CD4-positive, alpha-beta memory T cell (primary cell): ENCODE measurements at regions of chr6 and their contacts with region 1.

Region 1: GRCh38 chr6:29752451-29753308 is 29.4 kb downstream of the HLA-F start:
- DNase-seq: peak; percentile 77 to 84 (median 81)
- H3K4me3 ChIP-seq: peak overlapping the region; percentile 95 to 97
- H3K4me3 Mint-ChIP-seq: peak overlapping the region; percentile 88 to 98 (median 96)
- H3K27ac ChIP-seq: peak overlapping the region; percentile 71
- H3K27ac Mint-ChIP-seq: peak overlapping the region; percentile 77 to 96 (median 95)
- H3K4me1 ChIP-seq: peaks cover 27% of the 10 kb centered on the region
- H3K4me1 Mint-ChIP-seq: peaks cover 30 to 57% (median 39%) of the 10 kb centered on the region in 4 donors
- H3K27me3 ChIP-seq: no peaks in the 10 kb centered on the region
- H3K27me3 Mint-ChIP-seq: peaks cover 0 to 5% of the 10 kb centered on the region in 2 donors

Region 2: GRCh38 chr6:29705389-29706231 is 47.1 kb before region 1 on chr6:
- CTCF ChIA-PET with region 1: interaction called, 100 read pairs
- POLR2A ChIA-PET with region 1: interaction called, 23 read pairs
- intact Hi-C with region 1: loop called (anchors 1 kb)
- DNase-seq: peak in 2 of 5 donors; percentile 48 to 51
- H3K4me3 ChIP-seq: no peak overlapping the region
- H3K4me3 Mint-ChIP-seq: peak overlapping the region in 4 of 8 donors; percentile 33 to 64 (median 44)
- H3K27ac ChIP-seq: no peak overlapping the region
- H3K27ac Mint-ChIP-seq: peak overlapping the region; percentile 63 to 90 (median 83)
- H3K4me1 ChIP-seq: peaks cover 54% of the 10 kb centered on the region
- H3K4me1 Mint-ChIP-seq: peaks cover 38 to 58% (median 51%) of the 10 kb centered on the region in 4 donors
- H3K27me3 ChIP-seq: no peaks in the 10 kb centered on the region
- H3K27me3 Mint-ChIP-seq: peaks cover 6 to 15% of the 10 kb centered on the region in 2 donors

Region 3: DNA sequence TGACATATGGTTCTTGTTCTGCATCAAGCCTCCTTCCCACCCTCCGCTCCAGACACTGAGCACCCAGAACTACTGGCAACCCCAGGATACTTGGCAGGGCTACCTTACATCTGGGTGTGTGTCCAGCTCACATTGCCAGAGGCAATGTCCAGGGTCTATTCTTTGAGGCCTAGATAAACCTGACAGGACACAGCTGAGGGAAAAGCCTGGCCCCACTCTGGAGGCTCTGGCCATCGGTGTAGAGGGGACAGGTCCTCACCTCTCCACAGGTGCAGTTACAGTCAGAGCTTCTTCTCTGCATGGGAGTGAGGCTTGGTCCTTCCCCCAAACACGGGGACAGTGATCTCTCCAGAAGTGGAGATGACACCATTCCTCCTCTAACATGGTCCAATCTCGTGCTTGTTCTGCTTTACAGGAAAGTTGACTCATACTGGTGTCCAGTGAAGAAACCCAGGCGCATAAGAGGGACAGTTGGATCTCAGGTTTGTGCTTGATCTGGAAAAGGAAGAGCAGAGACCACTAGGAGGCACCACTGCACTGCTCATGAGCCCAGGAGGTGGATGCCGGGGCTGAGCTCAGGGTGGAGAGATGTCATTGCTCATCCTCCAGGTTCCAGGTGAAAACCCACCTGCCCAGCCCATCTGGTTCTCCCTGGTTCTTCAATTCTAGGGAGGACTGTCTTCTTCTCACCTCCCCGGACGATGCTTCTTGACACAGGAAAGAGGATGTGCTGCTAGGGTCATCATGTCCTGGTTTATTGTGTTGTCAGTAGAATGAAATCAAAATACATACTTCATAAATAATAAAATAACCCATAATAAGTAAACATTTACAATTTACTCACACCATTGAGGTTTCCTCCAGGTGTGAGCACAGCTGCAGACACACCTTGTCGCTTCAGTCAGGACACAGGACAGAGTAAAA is 14.7 kb before region 1 on chr6:
- CTCF ChIA-PET with region 1: interaction called, 141 read pairs
- POLR2A ChIA-PET with region 1: interaction called, 99 read pairs
- intact Hi-C with region 1: loop called (anchors 1 kb)
- DNase-seq: peak; percentile 68 to 78 (median 72)
- H3K4me3 ChIP-seq: no peak overlapping the region
- H3K4me3 Mint-ChIP-seq: no peak overlapping the region
- H3K27ac ChIP-seq: no peak overlapping the region
- H3K27ac Mint-ChIP-seq: peak overlapping the region in 1 of 7 donors; percentile 2
- H3K4me1 ChIP-seq: peaks cover 3% of the 10 kb centered on the region
- H3K4me1 Mint-ChIP-seq: peaks cover 5 to 18% (median 8%) of the 10 kb centered on the region in 4 donors
- H3K27me3 ChIP-seq: no peaks in the 10 kb centered on the region
- H3K27me3 Mint-ChIP-seq: no peaks in the 10 kb centered on the region

Region 4: DNA sequence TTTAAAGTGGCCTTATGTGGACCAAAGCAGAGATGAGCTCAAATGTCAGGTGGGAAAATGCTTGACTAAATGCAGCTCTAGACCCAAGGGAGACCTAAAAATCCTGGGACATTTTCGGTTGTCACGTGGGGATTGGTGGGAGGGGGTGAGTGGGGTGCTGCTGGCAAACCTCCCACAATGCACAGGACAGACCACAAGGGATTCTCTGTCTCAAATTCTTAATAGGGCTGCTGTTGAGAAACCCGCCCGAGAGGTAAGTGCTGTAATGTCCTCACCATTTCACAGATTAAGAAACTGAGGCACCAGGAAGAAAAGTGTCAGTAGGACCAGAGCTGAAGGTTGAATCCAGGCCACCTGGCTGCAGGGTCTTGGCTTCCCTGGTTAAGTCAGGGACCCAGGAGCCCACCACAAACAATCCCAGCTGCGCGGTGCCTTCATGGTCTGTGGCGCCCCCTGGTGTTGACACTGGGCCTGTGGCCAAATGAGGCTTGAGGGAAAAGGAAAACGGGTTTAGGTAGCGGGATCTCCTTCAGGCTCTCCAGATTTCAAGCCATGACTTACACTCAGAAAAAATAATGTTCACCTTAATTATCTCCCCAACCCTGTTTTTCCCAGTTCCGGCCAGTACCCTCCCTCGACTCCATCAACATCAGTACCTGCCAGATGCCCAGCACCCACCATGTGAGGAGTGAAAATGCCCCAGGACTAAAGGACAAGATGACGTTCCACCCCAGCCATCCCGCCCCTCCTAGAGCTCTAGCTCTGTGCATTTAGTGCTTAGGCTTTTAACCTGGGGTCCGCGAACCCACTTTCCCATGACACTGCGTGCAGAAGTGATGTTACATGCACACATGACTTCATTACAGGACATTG is 82.1 kb after region 1 on chr6:
- CTCF ChIA-PET with region 1: interaction called, 16 read pairs
- POLR2A ChIA-PET with region 1: interaction called, 3 read pairs
- intact Hi-C with region 1: loop called (anchors 5 kb)
- DNase-seq: peak in 4 of 5 donors; percentile 41 to 50 (median 44)
- H3K4me3 ChIP-seq: no peak overlapping the region
- H3K4me3 Mint-ChIP-seq: no peak overlapping the region
- H3K27ac ChIP-seq: no peak overlapping the region
- H3K27ac Mint-ChIP-seq: peak overlapping the region in 1 of 7 donors; percentile 19
- H3K4me1 ChIP-seq: no peaks in the 10 kb centered on the region
- H3K4me1 Mint-ChIP-seq: peaks cover 0 to 5% (median under 1%) of the 10 kb centered on the region in 4 donors
- H3K27me3 ChIP-seq: peaks cover 15% of the 10 kb centered on the region
- H3K27me3 Mint-ChIP-seq: peaks cover 35 to 57% of the 10 kb centered on the region in 2 donors

Region 5: DNA sequence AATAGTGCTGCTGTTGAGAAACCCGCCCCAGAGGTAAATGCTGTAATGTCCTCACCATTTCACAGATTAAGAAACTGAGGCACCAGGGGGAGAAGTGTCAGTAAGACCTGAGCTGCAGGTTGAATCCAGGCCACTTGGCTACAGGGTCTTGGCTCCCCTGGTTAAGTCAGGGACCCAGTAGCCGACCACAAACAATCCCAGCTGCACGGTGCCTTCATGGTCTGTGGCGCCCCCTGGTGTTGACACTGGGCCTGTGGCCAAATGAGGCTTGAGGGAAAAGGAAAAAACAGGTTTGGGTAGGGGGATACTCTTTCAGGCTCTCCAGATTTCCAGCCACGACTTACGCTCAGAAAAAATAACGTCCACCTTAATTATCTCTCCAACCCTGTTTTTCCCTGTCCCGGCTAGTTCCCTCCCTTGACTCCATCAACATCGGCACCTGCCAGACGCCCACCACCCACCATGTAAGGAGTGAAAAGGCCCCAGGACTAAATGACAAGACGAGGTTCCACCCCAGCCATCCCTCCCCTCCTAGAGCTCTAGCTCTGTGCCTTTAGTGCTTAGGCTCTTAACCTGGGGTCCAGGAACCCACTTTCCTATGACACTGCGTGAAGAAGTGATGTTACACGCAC is 260.7 kb after region 1 on chr6:
- CTCF ChIA-PET with region 1: no interaction called
- POLR2A ChIA-PET with region 1: no interaction called
- intact Hi-C with region 1: loop called (anchors 10 kb)
- DNase-seq: peak; percentile 12 to 41 (median 32)
- H3K4me3 ChIP-seq: no peak overlapping the region
- H3K4me3 Mint-ChIP-seq: no peak overlapping the region
- H3K27ac ChIP-seq: no peak overlapping the region
- H3K27ac Mint-ChIP-seq: no peak overlapping the region
- H3K4me1 ChIP-seq: no peaks in the 10 kb centered on the region
- H3K4me1 Mint-ChIP-seq: no peaks in the 10 kb centered on the region
- H3K27me3 ChIP-seq: peaks cover 2% of the 10 kb centered on the region
- H3K27me3 Mint-ChIP-seq: peaks cover 6 to 14% of the 10 kb centered on the region in 2 donors